SK-N-SH (cell line): ENCODE measurements at regions of chr3 and their contacts with region 1.

Region 1: DNA sequence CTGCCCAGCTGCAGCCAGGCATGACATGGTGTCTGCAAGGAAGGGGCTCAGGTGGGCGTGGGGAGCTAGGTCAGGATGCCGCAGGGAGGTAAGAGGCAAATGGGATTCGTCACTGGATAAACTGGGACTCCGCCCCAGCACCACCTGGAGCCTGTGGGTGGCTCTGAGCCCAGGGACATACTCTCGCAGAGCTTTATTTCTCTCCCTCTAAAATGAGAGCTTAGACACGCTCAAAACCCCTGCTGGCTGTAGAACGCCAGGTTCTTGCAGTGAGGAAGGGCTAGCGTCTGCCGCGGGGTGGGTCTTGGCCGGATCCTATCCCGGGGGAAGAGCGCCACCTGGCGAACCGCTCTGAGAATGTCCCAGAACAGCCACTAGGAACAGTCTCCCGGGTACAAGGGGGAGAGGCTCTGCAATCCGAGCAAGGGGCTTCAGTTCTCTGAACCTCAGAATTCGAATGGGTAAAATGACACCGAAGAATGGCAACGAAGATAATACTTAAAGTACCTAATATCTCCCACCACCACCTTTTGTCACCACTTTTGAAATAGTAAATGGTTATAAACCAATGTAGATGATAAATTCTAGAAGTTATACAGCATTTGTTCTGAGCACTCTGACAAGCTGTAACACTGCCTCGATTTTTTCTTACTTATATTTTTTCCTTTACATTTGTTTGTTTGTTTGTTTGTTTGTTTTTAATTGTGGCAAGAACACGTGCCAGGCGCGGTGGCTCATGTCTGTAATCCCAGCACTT is 53.2 kb upstream of the SRGAP3 start:
- DNase-seq: peak; percentile 88
- H3K4me3 ChIP-seq: peak overlapping the region; percentile 13 to 56; a peak in 2 of 4 replicates
- H3K27ac ChIP-seq: no peak overlapping the region
- H3K4me1 ChIP-seq: peaks cover 0 to 4% of the 10 kb centered on the region in 2 experiments; a peak in 1 of 4 replicates
- H3K27me3 ChIP-seq: no peaks in the 10 kb centered on the region
- CTCF ChIP-seq: peak; percentile 93
- EP300 ChIP-seq: no peak
- RAD21 ChIP-seq: peak; percentile 99

Region 2: GRCh38 chr3:8964436-8965370 is 337.9 kb before region 1 on chr3:
- CTCF ChIA-PET with region 1: interaction called, 15 read pairs
- POLR2A ChIA-PET with region 1: no interaction called
- DNase-seq: no peak
- H3K4me3 ChIP-seq: no peak overlapping the region
- H3K27ac ChIP-seq: peak overlapping the region in 1 of 2 experiments; percentile 77; a peak in 2 of 4 replicates
- H3K4me1 ChIP-seq: peaks cover 11 to 17% of the 10 kb centered on the region in 2 experiments; a peak in 3 of 4 replicates
- H3K27me3 ChIP-seq: no peaks in the 10 kb centered on the region
- CTCF ChIP-seq: no peak
- EP300 ChIP-seq: no peak; a peak in 1 of 4 replicates
- RAD21 ChIP-seq: no peak

Region 3: DNA sequence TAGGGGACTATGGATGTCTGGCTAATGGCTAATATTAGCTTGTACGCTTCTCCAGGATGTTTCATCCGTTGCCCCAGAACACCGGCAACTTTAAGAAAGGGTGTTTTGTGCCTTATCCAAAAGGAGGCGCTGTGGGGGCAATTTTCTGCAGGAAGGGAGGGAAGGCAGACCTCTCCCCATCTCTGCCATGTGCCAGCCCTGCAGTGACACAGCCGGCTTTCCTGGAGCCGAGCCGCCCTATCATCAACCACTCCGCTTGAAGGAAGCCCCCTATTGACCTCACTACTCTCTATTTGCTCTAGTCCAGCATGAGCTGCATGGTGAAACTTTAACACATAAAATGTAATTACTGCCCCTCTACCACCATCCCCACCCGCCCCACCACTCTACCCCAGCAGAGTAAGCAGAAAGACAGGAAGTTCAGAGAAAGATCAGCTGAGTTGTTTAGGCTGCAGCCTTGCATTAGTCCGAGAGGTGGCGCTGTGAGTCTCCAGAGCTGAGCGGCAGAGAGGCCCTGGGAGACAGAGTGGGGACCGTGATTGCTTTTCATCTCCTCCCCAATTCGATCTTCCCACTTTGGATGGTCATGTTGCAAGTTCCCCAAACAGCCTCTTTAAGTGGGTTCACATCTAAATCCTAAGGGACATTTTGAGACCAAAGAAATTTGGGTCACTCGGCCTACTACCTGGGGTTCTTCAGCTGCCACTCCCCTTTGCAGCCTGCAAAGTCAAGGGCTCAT is 314.8 kb before region 1 on chr3:
- CTCF ChIA-PET with region 1: interaction called, 112 read pairs
- POLR2A ChIA-PET with region 1: no interaction called
- DNase-seq: peak; percentile 91
- H3K4me3 ChIP-seq: no peak overlapping the region; a peak in 1 of 4 replicates
- H3K27ac ChIP-seq: no peak overlapping the region
- H3K4me1 ChIP-seq: peaks cover 0 to 4% of the 10 kb centered on the region in 2 experiments; a peak in 1 of 4 replicates
- H3K27me3 ChIP-seq: no peaks in the 10 kb centered on the region
- CTCF ChIP-seq: peak; percentile 74
- EP300 ChIP-seq: no peak
- RAD21 ChIP-seq: peak; percentile 85

Region 4: GRCh38 chr3:9056581-9056980 is 246.0 kb before region 1 on chr3:
- CTCF ChIA-PET with region 1: interaction called, 17 read pairs
- POLR2A ChIA-PET with region 1: no interaction called
- DNase-seq: no peak
- H3K4me3 ChIP-seq: no peak overlapping the region
- H3K27ac ChIP-seq: no peak overlapping the region
- H3K4me1 ChIP-seq: peaks cover 0 to 8% of the 10 kb centered on the region in 2 experiments; a peak in 1 of 4 replicates
- H3K27me3 ChIP-seq: no peaks in the 10 kb centered on the region; the same call in 1 of the 2 replicates
- CTCF ChIP-seq: no peak
- EP300 ChIP-seq: no peak
- RAD21 ChIP-seq: no peak

Region 5: GRCh38 chr3:9214599-9214998 is 88.0 kb before region 1 on chr3:
- CTCF ChIA-PET with region 1: interaction called, 10 read pairs
- POLR2A ChIA-PET with region 1: no interaction called
- DNase-seq: no peak
- H3K4me3 ChIP-seq: no peak overlapping the region
- H3K27ac ChIP-seq: peak overlapping the region; percentile 12 to 18; a peak in 2 of 4 replicates
- H3K4me1 ChIP-seq: peaks cover 0 to 28% of the 10 kb centered on the region in 2 experiments; a peak in 2 of 4 replicates
- H3K27me3 ChIP-seq: no peaks in the 10 kb centered on the region
- CTCF ChIP-seq: no peak
- EP300 ChIP-seq: peak in 1 of 2 experiments; percentile 54; a peak in 1 of 4 replicates
- RAD21 ChIP-seq: no peak

Region 6: GRCh38 chr3:9255976-9256375 is 46.6 kb before region 1 on chr3:
- CTCF ChIA-PET with region 1: interaction called, 37 read pairs
- POLR2A ChIA-PET with region 1: no interaction called
- DNase-seq: no peak
- H3K4me3 ChIP-seq: no peak overlapping the region
- H3K27ac ChIP-seq: no peak overlapping the region
- H3K4me1 ChIP-seq: no peaks in the 10 kb centered on the region
- H3K27me3 ChIP-seq: peaks cover 5% of the 10 kb centered on the region; the same call in 1 of the 2 replicates
- CTCF ChIP-seq: no peak
- EP300 ChIP-seq: no peak
- RAD21 ChIP-seq: no peak